GM13976 (cell line): ENCODE measurements at regions of chr6 and their contacts with region 1.

Region 1: GRCh38 chr6:161429921-161430490 is 156.1 kb upstream of the AGPAT4 start:
- DNase-seq: no peak
- CTCF ChIP-seq: no peak

Region 2: DNA sequence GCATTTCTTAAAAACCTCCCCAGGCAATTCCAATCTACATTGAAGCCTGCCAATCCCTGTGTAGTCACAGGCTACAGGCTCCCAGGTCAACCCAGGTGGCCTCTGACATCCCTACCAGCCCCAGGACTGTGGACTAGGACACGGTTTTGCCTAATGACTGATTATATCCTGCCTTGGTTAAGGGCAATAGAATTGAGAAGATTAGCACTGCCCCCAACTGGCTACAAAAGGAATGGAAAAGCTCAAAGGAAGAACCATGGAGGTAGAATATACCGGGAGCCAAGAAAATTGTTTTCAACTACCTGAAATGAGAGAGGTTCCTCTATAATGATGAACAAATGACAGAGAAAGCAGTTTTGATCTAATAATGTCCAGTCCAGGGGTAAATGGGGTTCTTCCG is 265.0 kb after region 1 on chr6:
- in situ Hi-C with region 1: loop called (anchors 10 kb)
- DNase-seq: no peak
- CTCF ChIP-seq: peak; percentile 41